Activated CD4-positive, alpha-beta T cell treated with anti-CD3 and anti-CD28 coated beads for 36 hours (primary cell): ENCODE measurements at regions of chr1 and their contacts with region 1.

Region 1: GRCh38 chr1:108504447-108504846 is 54.3 kb downstream of the NBPF6 start:
- DNase-seq: peak; percentile 16
- ATAC-seq: peak; percentile 95
- H3K4me3 Mint-ChIP-seq: no peak overlapping the region
- H3K27ac Mint-ChIP-seq: no peak overlapping the region
- H3K4me1 Mint-ChIP-seq: no peaks in the 10 kb centered on the region
- H3K27me3 Mint-ChIP-seq: peaks cover 36% of the 10 kb centered on the region

Region 2: DNA sequence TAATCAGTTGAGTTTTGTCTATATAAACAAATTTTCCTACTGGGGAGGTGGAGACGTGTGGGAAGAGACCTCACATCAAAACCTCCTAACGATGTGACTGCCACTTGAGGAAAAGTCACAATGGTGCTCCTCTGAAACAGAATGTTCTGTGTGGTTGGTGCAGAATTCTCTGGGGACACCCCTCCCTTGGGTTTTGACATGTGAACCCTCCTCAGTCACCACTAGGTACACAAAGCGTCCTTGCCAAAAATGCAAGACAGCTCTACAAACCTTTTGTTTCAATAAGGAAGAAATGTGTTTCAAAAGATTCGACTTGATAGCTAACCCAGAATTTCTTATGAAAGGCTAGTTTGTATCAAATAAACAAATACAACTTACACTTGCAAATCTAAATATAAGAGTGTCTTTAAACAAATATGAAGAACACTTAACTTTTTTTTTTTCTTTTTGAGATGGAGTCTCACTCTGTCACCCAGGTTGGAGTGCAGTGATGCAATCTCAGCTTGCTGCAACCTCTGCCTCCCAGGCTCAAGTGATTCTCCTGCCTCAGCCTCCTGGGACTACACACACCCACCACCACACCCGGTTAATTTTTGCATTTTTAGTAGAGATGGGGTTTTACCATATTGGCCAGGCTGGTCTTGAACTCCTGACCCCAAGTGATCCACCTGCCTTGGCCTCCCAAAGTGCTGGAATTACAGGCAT is 313.6 kb before region 1 on chr1:
- CTCF ChIA-PET with region 1: no interaction called
- POLR2A ChIA-PET with region 1: no interaction called
- intact Hi-C with region 1: no loop called
- DNase-seq: no peak
- ATAC-seq: no peak
- H3K4me3 Mint-ChIP-seq: no peak overlapping the region
- H3K27ac Mint-ChIP-seq: no peak overlapping the region
- H3K4me1 Mint-ChIP-seq: peaks cover 12% of the 10 kb centered on the region
- H3K27me3 Mint-ChIP-seq: no peaks in the 10 kb centered on the region

Region 3: GRCh38 chr1:108551137-108551862 is 46.9 kb after region 1 on chr1:
- CTCF ChIA-PET with region 1: interaction called, 4 read pairs
- POLR2A ChIA-PET with region 1: interaction called, 3 read pairs
- intact Hi-C with region 1: loop called in 1 of 2 experiments (anchors 1 kb)
- DNase-seq: no peak
- ATAC-seq: peak; percentile 87
- H3K4me3 Mint-ChIP-seq: no peak overlapping the region
- H3K27ac Mint-ChIP-seq: no peak overlapping the region
- H3K4me1 Mint-ChIP-seq: peaks cover 4% of the 10 kb centered on the region
- H3K27me3 Mint-ChIP-seq: peaks cover 5% of the 10 kb centered on the region